Dendritic cell treated with granulocyte-macrophage colony-stimulating factor and Interleukin-4, amounts not matched to agents 40 ng/mL and 50 ng/mL, for 4 days (primary cell): ENCODE measurements at regions of chr11 and their contacts with region 1.

Region 1: DNA sequence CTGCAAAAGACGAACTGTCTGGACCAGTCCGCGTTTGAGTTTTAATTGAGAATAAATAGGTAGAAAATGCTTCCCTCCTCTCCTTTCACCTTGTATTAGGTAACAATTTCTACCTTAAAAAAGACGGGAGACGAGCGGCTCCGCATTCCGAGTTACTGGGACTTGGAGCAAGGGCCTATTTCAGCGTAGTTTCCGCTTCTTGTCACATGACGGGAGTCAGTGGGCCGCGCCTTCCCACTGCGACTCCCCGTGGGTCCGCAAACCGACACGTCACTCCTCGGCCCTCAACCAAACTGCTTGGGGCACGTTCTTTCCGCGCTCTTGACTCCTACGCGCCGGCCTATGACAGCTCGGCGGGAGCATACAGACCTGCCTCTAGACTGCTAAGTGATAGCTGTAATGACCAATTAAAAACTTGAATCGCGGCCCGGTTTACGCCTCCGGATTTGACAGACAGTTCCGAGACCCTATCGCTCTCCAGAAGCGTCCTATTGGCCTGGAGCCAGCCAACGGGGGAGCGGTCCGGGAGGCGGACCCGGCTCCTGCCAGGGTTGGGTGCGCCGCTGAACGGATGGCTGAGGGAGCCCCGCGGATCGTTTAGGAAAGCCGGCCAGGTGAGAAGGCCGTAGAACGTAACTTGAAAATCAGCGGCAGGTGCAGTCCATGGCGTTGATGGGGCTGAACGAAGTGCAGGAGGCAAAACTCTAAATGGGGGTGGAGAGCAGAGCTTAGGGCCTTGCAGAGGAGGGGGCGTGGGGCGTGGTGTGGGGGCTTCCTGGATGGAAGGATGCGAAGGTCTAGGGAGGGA is at the start of gene STT3A:
- H3K4me3 Mint-ChIP-seq: peak within 1 kb of the TSS; percentile 95
- H3K27ac Mint-ChIP-seq: peak within 1 kb of the TSS; percentile 99
- H3K4me1 Mint-ChIP-seq: peaks cover 44% of the 10 kb centered on the region
- H3K27me3 Mint-ChIP-seq: no peaks in the 10 kb centered on the region

Region 2: DNA sequence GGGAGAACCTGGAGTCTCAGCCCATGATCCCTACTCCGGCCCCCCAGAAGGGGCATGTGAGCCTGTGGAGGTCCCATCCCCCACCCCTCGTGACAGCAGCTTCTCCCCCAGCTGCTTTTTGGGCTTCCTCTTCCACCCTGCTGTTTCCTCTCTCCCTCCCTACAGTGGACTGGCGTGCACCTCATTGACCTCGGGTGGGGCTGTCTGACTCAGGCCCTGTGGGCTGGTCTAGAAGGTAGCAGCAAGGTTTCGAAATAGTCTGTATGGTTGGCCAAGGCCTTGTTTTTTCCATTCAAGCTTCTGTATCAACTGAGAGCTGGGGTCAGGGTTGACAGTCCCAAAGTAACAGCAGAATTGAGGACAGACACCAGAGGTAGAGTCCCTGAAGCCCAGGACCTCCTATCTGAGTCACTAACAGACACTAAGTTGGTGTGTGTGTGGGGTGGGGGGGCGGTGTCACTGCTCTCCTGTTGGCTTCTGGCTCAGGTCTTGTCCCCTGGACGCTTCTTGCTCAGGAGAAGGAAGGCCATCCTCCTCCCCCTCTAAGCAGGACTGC is 521.7 kb before region 1 on chr11:
- intact Hi-C with region 1: loop called (anchors 10 kb)
- H3K4me3 Mint-ChIP-seq: peak overlapping the region; percentile 42
- H3K27ac Mint-ChIP-seq: peak overlapping the region; percentile 96
- H3K4me1 Mint-ChIP-seq: peaks cover 88% of the 10 kb centered on the region
- H3K27me3 Mint-ChIP-seq: no peaks in the 10 kb centered on the region

Region 3: DNA sequence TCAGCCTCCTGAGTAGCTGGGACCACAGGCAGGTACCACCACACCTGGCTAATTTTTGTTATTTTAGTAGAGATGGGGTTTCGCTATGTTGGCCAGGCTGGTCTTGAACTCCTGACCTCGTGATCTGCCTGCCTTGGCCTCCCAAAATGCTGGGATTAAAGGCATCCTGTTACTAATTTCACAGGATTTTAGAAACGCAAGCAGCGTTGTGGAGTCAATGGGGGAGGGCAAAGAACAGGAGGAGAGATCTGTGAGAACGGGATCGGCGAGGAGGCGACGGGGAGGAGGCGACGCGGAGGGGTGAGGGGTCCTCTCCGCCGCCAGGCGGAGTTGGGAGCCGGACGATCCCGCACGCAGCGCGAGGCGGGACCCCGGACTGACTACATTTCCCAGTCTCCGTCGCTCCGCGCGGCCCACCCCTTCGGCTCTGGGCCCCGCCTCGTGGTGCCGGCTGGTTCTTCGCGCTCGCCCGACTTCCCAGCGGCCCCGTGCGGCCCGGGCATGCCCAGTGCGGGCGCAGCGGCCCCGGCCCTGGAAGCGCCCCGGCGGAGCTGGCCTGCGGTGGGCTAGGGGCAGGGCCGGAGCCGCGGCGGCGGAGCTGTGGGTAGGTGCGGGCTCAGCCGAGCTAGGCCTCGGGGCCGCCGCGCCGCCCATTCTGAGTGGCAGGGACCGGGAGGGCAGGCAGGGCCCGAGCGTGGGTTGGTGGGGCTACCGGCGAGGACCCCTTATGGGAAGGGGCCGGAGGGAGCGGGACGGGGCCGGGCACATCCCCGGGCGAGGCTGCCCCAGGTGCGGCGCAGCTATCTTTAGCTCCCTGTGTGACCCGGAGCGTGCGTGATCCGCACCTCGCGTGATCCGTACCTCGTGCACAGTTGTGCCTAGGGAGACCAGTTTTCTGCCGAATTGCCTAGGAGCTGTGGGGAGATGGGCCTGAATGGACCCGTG is 23.3 kb before region 1 on chr11 and contains the start of gene EI24:
- intact Hi-C with region 1: loop called (anchors 1 kb)
- H3K4me3 Mint-ChIP-seq: peak within 1 kb of the TSS; percentile 84
- H3K27ac Mint-ChIP-seq: peak within 1 kb of the TSS; percentile 85
- H3K4me1 Mint-ChIP-seq: peaks cover 14% of the 10 kb centered on the region
- H3K27me3 Mint-ChIP-seq: no peaks in the 10 kb centered on the region

Region 4: DNA sequence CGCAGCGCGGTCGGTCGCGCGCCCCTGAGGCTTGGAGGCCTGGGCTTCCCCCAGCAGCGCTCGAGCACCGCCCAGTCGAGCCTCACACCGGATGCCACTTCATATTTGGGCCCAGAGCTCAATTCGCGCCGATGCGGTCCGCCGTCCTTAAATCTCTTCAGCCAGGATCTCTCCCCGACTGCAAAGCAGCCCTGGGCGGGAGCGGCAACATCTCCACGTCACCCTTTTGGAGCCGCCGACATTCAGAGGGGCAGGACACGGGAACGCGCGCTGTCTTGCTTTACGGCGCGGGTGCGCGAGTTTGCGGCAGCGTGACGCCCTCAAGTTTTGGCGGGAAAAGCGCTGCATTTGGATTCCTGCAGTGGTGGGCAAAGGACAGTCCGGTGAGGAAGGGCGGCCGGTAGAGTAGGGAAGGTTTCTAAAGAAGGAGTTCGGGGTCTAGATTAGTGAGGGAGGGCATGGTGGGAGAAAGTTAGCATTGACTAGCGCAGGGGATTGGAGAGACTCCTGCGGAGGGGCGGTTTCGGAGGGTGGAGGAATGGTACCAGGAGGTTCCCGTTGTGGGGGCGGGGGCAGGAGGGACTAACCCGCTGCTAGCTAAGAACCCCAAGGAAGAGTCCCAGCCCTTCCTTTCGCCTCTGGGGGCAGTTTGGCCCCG is 33.2 kb after region 1 on chr11:
- intact Hi-C with region 1: loop called (anchors 5 kb)
- H3K4me3 Mint-ChIP-seq: peak overlapping the region; percentile 100
- H3K27ac Mint-ChIP-seq: peak overlapping the region; percentile 97
- H3K4me1 Mint-ChIP-seq: peaks cover 22% of the 10 kb centered on the region
- H3K27me3 Mint-ChIP-seq: no peaks in the 10 kb centered on the region

Region 5: DNA sequence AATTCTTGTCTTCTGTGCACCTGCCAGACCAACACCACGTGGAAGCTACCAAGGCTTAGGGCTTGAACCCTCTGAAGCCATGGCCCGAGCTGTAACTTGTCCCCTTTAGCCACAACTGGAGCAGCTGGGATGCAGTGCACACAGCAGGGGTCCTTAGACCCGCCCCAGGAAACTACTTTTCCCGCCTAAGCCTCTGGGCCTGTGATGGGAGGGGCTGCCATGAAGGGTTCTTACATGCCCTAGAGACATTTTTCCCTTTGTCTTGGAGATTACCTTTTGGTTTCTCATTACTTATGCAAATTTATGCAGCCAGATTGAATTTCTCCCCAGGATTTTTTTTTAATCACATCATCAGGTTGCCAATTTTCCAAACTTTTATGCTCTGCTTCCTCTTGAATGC is 205.1 kb after region 1 on chr11:
- intact Hi-C with region 1: no loop called
- H3K4me3 Mint-ChIP-seq: no peak overlapping the region
- H3K27ac Mint-ChIP-seq: no peak overlapping the region
- H3K4me1 Mint-ChIP-seq: no peaks in the 10 kb centered on the region
- H3K27me3 Mint-ChIP-seq: no peaks in the 10 kb centered on the region

Region 6: GRCh38 chr11:126211235-126212088 is 619.0 kb after region 1 on chr11 and contains the starts of genes FAM118B and RPUSD4:
- intact Hi-C with region 1: loop called (anchors 5 kb)
- H3K4me3 Mint-ChIP-seq: peak within 1 kb of the TSS; percentile 97
- H3K27ac Mint-ChIP-seq: peak within 1 kb of the TSS; percentile 94
- H3K4me1 Mint-ChIP-seq: peaks cover 46% of the 10 kb centered on the region
- H3K27me3 Mint-ChIP-seq: no peaks in the 10 kb centered on the region

Region 7: DNA sequence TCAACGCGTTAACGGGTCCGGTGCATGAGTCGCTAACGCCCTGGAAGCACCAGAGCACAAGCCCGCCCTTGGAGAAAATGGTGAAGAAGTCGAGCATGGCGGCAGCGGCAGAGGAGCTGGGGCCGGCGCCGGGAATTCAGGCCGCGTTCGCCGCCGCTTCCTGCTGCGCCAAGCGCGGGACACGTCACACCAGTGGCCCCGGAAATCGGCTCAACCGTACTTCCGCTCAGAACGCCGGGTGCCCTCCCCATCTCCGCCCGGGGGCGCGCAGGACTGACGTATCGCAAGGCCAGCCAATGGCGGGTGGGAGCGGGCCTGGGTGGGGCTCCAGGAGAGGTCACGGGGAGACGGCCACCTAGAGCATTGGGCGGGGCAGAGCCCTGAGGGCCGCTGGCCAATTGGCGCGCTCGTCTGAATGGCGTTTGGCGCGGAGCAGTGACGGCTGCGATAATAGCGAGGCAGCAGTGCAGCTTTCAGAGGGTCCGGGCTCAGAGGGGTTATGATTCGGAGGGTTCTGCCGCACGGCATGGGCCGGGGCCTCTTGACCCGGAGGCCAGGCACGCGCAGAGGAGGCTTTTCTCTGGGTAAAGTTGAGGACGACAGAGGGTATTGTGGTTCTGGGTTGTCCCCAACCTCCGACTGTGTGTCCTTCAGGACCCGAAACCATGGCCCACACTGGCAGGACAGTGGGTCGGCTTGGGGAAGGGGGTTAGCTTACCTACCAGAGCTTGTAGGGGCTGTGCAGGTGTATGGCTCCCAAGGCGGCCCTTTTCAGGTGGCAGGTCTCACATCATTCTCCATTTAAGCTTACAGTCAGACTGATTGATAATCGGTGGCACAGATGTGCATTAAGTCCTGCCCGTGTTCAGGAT is 676.4 kb after region 1 on chr11 and contains the starts of genes FOXRED1 and SRPRA:
- intact Hi-C with region 1: loop called (anchors 2 kb)
- H3K4me3 Mint-ChIP-seq: peak within 1 kb of the TSS; percentile 94
- H3K27ac Mint-ChIP-seq: peak within 1 kb of the TSS; percentile 98
- H3K4me1 Mint-ChIP-seq: peaks cover 28% of the 10 kb centered on the region
- H3K27me3 Mint-ChIP-seq: no peaks in the 10 kb centered on the region